ENCODE measurements at regions of chr19 and their contacts with region 1.

Region 1: GRCh38 chr19:38229585-38230073 is 5.6 kb upstream of the DPF1 start:
- DNase-seq: no peak
- ATAC-seq: peak; percentile 92
- H3K4me3 ChIP-seq: peak overlapping the region; percentile 48 to 57
- H3K27ac ChIP-seq: no peak overlapping the region
- H3K4me1 ChIP-seq: peaks cover 16% of the 10 kb centered on the region
- H3K27me3 ChIP-seq: peaks cover 2% of the 10 kb centered on the region; the same call in 1 of the 2 replicates
- CTCF ChIP-seq: no peak

Region 2: DNA sequence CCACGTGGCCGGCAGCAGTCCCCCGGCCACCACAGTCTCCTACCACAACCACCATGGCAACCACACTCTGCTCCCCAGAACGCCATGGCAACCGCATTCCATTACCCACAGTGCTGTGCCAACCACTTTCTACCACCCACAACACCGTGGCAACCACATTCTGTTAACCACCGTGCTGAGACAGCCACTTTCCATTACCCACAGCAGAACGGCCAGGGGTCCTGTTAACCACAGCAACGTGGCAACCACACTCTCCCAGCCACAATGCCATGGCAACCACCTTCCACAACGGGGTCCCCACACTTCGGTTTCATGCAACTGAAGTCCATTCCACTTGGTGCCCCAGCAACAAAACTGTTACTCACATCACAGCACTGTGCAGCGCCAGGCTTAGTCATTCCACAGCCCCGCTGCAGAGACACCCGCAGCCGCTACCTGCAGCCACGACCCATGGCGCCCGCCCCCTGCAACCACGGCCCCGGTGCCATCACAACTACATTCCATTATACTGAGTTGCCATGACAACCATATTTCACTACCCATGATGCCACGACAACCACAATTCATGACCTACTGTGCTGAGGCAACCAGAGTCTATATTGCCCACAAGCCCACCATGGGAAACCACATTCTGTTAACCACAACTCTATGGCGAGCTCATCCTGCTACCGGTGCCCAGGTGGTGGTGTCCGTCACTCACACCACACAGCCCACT is 15.6 kb before region 1 on chr19:
- CTCF ChIA-PET with region 1: interaction called, 11 read pairs
- POLR2A ChIA-PET with region 1: no interaction called
- in situ Hi-C with region 1: no loop called
- intact Hi-C with region 1: no loop called
- DNase-seq: no peak
- ATAC-seq: peak; percentile 51
- H3K4me3 ChIP-seq: no peak overlapping the region
- H3K27ac ChIP-seq: no peak overlapping the region
- H3K4me1 ChIP-seq: peaks cover 16% of the 10 kb centered on the region
- H3K27me3 ChIP-seq: no peaks in the 10 kb centered on the region
- CTCF ChIP-seq: no peak

Region 3: GRCh38 chr19:38252385-38252784 is 22.8 kb after region 1 on chr19:
- CTCF ChIA-PET with region 1: interaction called, 10 read pairs
- POLR2A ChIA-PET with region 1: no interaction called
- in situ Hi-C with region 1: no loop called
- intact Hi-C with region 1: no loop called
- DNase-seq: no peak
- ATAC-seq: no peak
- H3K4me3 ChIP-seq: peak overlapping the region in 1 of 2 experiments; percentile 78; a peak in 2 of 4 replicates
- H3K27ac ChIP-seq: peak overlapping the region; percentile 90
- H3K4me1 ChIP-seq: peaks cover 58% of the 10 kb centered on the region
- H3K27me3 ChIP-seq: no peaks in the 10 kb centered on the region
- CTCF ChIP-seq: no peak

Region 4: DNA sequence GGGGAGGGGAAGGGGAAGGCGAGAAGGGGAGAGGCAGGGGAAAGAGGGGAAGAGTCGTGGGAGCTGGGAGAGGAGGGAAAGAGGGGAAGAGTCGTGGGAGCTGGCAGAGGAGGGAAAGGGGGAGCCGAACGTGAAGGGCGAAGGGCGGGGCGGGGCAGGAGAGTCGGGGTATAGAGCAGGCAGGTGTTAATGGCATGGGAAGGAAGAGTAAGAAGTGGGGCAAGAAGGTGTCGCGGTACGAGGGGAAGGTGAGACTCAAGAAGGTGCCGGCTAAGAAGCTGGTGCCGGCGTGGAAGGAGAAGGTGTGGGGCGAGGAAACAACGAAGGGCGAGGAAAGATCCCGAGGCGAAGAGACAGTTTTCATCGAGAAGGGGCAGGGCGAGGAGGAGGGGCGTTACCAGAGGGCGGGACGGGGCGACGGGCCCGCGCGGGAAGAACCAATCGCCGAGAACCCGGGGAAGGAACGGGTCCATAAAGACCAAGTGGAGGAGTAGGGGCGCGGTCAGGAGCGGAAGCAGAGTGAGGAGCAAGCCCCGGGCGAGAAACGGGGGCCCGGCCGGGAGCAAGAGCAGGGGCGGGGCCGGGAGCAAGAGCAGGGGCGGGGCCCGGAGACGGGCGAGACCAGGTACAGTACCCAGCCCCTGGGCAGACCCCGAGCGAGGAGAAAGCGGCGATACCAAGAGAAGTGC is 106.5 kb after region 1 on chr19:
- CTCF ChIA-PET with region 1: interaction called, 17 read pairs
- POLR2A ChIA-PET with region 1: interaction called, 4 read pairs
- in situ Hi-C with region 1: no loop called
- intact Hi-C with region 1: loop called (anchors 1 kb)
- DNase-seq: peak; percentile 83
- ATAC-seq: peak; percentile 89
- H3K4me3 ChIP-seq: peak overlapping the region; percentile 72 to 96
- H3K27ac ChIP-seq: peak overlapping the region; percentile 80
- H3K4me1 ChIP-seq: peaks cover 4% of the 10 kb centered on the region; the same call in 1 of the 2 replicates
- H3K27me3 ChIP-seq: no peaks in the 10 kb centered on the region
- CTCF ChIP-seq: no peak

Region 5: GRCh38 chr19:38496603-38497487 is 267.2 kb after region 1 on chr19:
- CTCF ChIA-PET with region 1: interaction called, 10 read pairs
- POLR2A ChIA-PET with region 1: no interaction called
- in situ Hi-C with region 1: no loop called
- intact Hi-C with region 1: no loop called
- DNase-seq: no peak
- ATAC-seq: no peak
- H3K4me3 ChIP-seq: no peak overlapping the region
- H3K27ac ChIP-seq: no peak overlapping the region
- H3K4me1 ChIP-seq: no peaks in the 10 kb centered on the region
- H3K27me3 ChIP-seq: no peaks in the 10 kb centered on the region
- CTCF ChIP-seq: no peak

Region 6: DNA sequence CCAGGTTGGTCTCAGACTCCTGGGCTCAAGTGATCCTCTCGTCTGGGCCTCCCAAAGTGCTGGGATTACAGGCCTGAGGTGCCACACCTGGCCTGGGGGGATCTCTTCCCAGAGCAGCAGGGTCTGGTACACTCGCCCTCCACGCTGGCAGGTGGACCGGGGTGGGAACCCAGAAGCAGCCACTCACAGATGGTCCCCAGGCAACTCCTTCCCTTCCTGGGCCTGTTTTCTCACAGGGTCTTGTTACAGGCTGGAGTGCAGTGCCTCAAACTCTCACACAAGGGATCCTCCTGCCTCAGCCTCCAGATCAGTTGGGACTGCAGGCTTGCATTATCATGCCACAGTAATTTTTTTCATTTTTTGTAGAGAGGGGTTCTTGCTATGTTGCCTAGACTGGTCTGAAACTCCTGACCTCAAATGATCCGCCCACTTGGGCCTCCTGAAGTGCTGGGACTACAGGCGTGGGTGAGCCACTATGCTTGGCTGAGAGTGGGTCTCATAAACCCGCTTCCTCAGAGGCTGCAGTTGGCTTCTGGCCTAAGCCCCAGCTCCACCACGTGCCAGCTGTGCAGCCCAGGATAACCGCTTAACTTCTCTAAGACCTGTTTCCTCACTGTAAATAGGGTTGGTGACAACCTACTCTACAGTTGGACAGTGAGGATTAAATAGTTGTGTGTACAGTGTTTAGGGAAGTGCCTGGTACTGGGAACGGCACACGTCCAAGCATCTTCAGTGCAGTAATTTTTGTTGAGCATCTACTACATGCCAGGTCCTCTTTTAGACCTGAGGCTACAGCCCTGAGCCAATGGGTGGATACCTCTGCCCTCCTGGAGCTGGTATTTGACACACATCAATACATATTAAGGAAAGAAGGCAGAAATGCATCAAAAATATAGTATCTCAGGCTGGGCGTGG is 683.2 kb after region 1 on chr19:
- CTCF ChIA-PET with region 1: no interaction called
- POLR2A ChIA-PET with region 1: no interaction called
- in situ Hi-C with region 1: no loop called
- intact Hi-C with region 1: no loop called
- DNase-seq: no peak
- ATAC-seq: peak; percentile 1; the same call in 1 of the 2 replicates
- H3K4me3 ChIP-seq: no peak overlapping the region
- H3K27ac ChIP-seq: no peak overlapping the region
- H3K4me1 ChIP-seq: peaks cover 3% of the 10 kb centered on the region
- H3K27me3 ChIP-seq: no peaks in the 10 kb centered on the region
- CTCF ChIP-seq: no peak